BJ (cell line): ENCODE measurements at regions of chr3 and their contacts with region 1.

Region 1: DNA sequence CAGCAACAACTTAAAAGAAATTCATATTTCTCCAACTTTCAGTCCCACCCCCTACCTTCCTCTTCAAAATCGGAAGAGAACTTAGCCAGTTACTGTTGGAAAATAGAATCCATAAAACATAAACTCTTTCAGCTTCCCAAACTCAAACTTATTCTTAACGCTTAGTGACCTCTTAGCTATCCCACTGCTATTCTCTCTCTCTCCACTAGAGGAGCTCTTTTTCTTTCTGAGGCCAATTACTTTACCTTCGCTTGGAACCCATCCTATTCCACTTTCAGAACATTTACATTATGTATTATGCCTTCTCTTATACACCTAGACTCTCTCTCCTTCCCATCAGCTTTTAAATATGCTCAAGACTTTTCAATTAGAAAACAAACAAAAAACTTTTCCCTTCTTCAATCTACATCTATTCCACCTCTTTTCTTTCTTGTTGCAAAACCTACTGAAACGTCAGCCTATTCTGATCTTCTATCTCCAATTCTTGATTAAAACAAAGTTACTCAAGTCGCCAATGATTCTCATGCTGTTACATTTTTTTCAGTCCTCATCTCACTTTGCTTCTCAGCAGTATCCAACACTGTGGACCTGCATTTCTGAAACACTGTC is 13.4 kb upstream of the GHSR start:
- DNase-seq: no peak
- H3K4me3 ChIP-seq: no peak overlapping the region
- H3K27me3 ChIP-seq: no peaks in the 10 kb centered on the region
- CTCF ChIP-seq: peak; percentile 89

Region 2: DNA sequence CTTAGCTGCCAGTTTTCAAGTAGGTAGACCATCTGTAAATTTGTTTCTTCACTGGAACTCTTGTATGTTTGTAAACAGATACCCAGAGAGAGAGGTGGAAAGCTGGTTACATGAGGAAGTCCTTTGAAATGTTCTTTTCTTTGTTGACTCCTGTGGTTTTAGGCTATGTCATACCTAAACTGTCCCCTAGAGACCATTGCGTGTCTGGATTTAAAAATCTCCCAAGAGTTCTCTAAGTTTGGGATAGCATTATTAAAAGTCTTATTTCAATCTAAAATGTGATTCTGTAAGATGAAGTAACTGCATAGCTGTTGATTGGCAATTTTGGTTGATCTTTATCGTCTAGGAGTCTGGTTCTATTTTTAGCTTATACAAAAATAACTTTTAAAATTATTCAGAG is 140.6 kb before region 1 on chr3:
- CTCF ChIA-PET with region 1: no interaction called
- POLR2A ChIA-PET with region 1: no interaction called
- DNase-seq: no peak
- H3K4me3 ChIP-seq: no peak overlapping the region
- H3K27me3 ChIP-seq: no peaks in the 10 kb centered on the region
- CTCF ChIP-seq: 0 out of 2 replicates have a peak, but pooled peaks have one; percentile 12

Region 3: GRCh38 chr3:172449466-172450149 is 12.0 kb before region 1 on chr3:
- CTCF ChIA-PET with region 1: interaction called, 10 read pairs
- POLR2A ChIA-PET with region 1: no interaction called
- DNase-seq: no peak
- H3K4me3 ChIP-seq: no peak overlapping the region
- H3K27me3 ChIP-seq: peaks cover 36% of the 10 kb centered on the region
- CTCF ChIP-seq: no peak